HepG2 (cell line): ENCODE measurements at regions of chr15 and their contacts with region 1.

Region 1: DNA sequence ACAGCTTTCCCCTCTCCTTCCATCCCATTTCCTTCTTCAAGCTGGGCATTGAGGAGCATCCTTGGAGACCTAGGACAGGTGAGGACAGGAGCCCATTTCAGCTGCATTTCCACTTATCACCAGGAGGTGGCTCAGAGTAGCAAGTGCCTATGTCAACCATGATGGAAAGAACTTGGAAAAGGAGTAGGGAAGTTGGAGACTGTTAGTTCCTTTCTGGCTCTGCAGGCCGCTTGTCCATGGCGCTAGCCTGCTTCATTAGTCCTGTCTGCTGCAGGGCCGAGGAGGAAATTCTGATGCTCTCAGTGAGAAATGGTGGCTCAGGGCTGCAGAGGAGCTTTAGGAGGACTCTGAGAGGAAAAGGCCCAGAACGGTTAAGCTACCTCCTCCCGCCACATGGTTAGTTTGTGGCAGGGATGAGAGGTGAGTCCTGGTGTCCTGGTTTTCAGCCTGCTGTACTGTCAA is 7.0 kb upstream of the CD276 start:
- DNase-seq: peak; percentile 65
- ATAC-seq: peak; percentile 92
- H3K4me3 ChIP-seq: no peak overlapping the region
- H3K27ac ChIP-seq: no peak overlapping the region
- H3K4me1 ChIP-seq: peaks cover 3% of the 10 kb centered on the region; the same call in 1 of the 2 replicates
- H3K27me3 ChIP-seq: peaks cover 0 to 33% of the 10 kb centered on the region in 2 experiments; a peak in 3 of 5 replicates
- CTCF ChIP-seq: peak; percentile 88
- EP300 ChIP-seq: no peak
- POLR2A ChIP-seq: no peak
- RAD21 ChIP-seq: peak; percentile 53; the same call in 1 of the 2 replicates

Region 2: DNA sequence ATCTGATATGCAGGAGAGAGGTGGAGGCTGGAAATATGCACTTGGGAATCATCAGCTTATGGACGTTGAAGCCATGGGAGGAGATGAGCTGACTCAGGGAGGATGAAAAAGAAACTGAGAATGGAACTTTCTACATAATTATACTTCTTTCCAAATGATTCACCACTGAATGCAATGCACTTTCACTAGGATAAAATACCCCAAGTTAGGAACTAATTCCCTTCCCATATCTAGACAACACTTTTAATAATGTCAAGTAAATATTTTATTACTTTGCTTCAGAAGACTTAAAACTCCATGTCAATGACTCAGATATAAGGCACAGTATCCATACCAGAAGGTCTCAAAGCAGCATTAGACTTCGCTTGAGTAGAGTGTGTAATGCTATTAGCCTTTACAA is 68.2 kb before region 1 on chr15:
- CTCF ChIA-PET with region 1: no interaction called
- POLR2A ChIA-PET with region 1: no interaction called
- in situ Hi-C with region 1: no loop called
- intact Hi-C with region 1: no loop called
- DNase-seq: no peak
- ATAC-seq: no peak
- H3K4me3 ChIP-seq: no peak overlapping the region
- H3K27ac ChIP-seq: no peak overlapping the region
- H3K4me1 ChIP-seq: peaks cover 21% of the 10 kb centered on the region
- H3K27me3 ChIP-seq: no peaks in the 10 kb centered on the region
- CTCF ChIP-seq: no peak
- EP300 ChIP-seq: no peak
- POLR2A ChIP-seq: no peak
- RAD21 ChIP-seq: no peak

Region 3: DNA sequence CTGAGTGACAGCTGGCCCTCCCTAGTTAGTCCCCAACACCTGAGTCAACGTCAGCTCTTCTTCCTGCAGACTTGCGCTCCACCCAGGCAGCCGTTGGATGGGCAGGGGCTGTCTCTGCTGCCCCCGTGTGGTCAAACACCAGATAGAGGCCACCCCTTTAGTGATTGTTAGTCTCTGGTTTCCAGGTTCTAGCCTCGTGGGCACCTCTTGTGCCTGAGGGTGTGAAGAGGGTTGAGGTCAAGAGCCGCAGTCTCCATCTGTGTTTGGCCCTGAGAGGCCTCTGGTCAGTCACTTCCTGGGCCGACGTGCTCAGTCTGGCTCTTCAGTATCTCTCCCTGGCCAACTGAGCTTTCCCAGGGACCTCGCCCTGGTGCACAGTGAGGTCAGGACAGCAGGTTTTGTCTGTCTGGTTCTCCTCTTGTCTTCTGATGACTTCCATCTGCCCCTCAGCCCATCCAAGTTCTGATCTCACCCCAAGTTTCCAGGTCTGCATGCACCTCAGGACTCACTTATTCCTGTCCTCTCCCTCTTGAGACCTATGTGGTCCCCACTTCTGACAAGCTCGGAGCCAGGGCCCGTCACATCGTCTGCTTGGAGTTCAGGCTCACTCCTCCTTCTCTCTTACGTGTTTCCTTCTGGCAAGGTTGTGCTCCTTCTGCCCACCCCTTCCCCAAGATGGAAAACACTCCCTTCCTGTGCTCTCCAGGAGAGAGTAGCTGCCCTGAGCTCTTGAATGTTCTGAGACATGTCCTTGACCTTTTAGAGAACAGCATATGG is 27.9 kb after region 1 on chr15:
- CTCF ChIA-PET with region 1: interaction called, 69 read pairs
- POLR2A ChIA-PET with region 1: no interaction called
- in situ Hi-C with region 1: no loop called
- intact Hi-C with region 1: loop called (anchors 1 kb)
- DNase-seq: peak; percentile 47
- ATAC-seq: peak; percentile 79
- H3K4me3 ChIP-seq: no peak overlapping the region
- H3K27ac ChIP-seq: no peak overlapping the region
- H3K4me1 ChIP-seq: peaks cover 4% of the 10 kb centered on the region
- H3K27me3 ChIP-seq: no peaks in the 10 kb centered on the region
- CTCF ChIP-seq: peak; percentile 88
- EP300 ChIP-seq: no peak
- POLR2A ChIP-seq: no peak
- RAD21 ChIP-seq: peak; percentile 75; the same call in 1 of the 2 replicates